B cell (primary cell): ENCODE measurements at regions of chr1 and their contacts with region 1.

Region 1: GRCh38 chr1:228212966-228213844 is 5.4 kb downstream of the OBSCN start:
- DNase-seq: peak; percentile 91
- ATAC-seq: peak; percentile 93
- H3K4me3 ChIP-seq: peak overlapping the region; percentile 19 to 73 (median 57)
- H3K4me3 Mint-ChIP-seq: peak overlapping the region; percentile 97
- H3K27ac ChIP-seq: peak overlapping the region in 1 of 2 donors; percentile 41
- H3K27ac Mint-ChIP-seq: peak overlapping the region; percentile 75
- H3K4me1 ChIP-seq: peaks cover 0 to 8% of the 10 kb centered on the region in 2 donors
- H3K4me1 Mint-ChIP-seq: peaks cover 5% of the 10 kb centered on the region
- H3K27me3 ChIP-seq: peaks cover 0 to 2% (median 0%) of the 10 kb centered on the region in 4 experiments
- H3K27me3 Mint-ChIP-seq: no peaks in the 10 kb centered on the region
- CTCF ChIP-seq: peak; percentile 34

Region 2: GRCh38 chr1:228082135-228082891 is 130.9 kb before region 1 on chr1 and contains the start of gene ARF1:
- CTCF ChIA-PET with region 1: no interaction called
- POLR2A ChIA-PET with region 1: no interaction called
- intact Hi-C with region 1: loop called (anchors 2 kb)
- DNase-seq: peak; percentile 96
- ATAC-seq: peak; percentile 92
- H3K4me3 ChIP-seq: peak within 1 kb of the TSS; percentile 78 to 97 (median 91)
- H3K4me3 Mint-ChIP-seq: peak within 1 kb of the TSS; percentile 94
- H3K27ac ChIP-seq: peak within 1 kb of the TSS; percentile 78 to 96
- H3K27ac Mint-ChIP-seq: peak within 1 kb of the TSS; percentile 93
- H3K4me1 ChIP-seq: peaks cover 44 to 50% of the 10 kb centered on the region in 2 donors
- H3K4me1 Mint-ChIP-seq: peaks cover 46% of the 10 kb centered on the region
- H3K27me3 ChIP-seq: no peaks in the 10 kb centered on the region
- H3K27me3 Mint-ChIP-seq: no peaks in the 10 kb centered on the region
- CTCF ChIP-seq: no peak
- total RNA-seq, gene ARF1: 193 and 195 TPM in 2 replicates

Region 3: DNA sequence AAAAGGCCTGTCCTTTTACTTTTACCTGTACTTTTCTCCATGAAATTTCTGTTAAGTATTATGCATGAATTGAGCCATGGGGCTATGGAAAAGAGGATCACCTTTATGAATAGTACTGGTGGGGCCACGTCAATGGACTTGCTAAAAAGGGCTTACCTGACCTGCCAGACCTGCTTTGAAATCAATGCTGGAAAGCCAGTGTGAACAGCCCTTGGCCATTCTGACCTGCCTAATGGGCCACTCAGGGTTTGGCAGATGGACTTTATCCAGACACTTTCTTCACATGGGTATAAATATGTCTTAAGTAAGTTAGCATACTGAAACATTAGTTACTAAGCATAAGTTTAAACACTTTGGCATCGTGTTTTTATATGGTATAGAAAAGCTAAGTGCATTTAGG is 81.4 kb before region 1 on chr1:
- CTCF ChIA-PET with region 1: interaction called, 4 read pairs
- POLR2A ChIA-PET with region 1: no interaction called
- intact Hi-C with region 1: loop called (anchors 1 kb)
- DNase-seq: no peak
- ATAC-seq: no peak
- H3K4me3 ChIP-seq: no peak overlapping the region
- H3K4me3 Mint-ChIP-seq: no peak overlapping the region
- H3K27ac ChIP-seq: no peak overlapping the region
- H3K27ac Mint-ChIP-seq: no peak overlapping the region
- H3K4me1 ChIP-seq: peaks cover 2 to 10% of the 10 kb centered on the region in 2 donors
- H3K4me1 Mint-ChIP-seq: peaks cover 14% of the 10 kb centered on the region
- H3K27me3 ChIP-seq: peaks cover 0 to 3% (median 1%) of the 10 kb centered on the region in 4 experiments
- H3K27me3 Mint-ChIP-seq: peaks cover 17% of the 10 kb centered on the region
- CTCF ChIP-seq: no peak

Region 4: DNA sequence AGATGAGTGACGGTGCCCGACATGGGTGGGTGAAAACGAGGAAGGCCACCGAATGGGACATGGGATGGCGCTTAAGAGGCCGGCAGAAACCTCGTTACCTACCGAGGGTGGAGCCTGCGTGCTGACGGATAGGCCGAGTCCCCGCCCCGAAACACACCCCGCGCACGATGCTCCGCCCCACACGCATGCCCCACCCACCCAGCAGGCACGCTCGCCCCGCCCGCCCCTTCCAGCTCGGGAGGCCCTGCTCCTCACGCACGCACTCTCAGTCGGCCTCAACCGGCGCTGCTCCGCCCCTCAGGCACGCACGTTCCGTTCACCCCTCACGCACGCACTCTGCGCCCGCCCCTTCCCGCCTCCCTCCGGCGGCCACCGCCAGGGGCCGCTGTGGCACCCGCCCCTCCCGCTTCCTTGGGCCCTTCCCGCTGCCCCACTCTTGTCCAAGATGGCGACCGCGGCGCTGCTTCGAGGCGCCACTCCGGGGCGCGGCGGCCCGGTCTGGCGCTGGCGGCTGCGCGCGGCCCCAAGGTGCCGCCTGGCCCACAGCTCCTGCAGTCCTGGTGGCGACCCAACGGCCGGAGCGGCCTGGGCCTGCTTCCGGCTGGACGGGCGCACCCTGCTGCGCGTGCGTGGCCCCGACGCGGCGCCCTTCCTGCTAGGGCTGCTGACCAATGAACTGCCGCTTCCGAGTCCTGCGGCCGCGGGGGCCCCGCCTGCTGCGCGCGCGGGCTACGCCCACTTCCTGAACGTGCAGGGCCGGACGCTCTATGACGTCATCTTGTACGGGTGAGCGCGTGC is 47.6 kb before region 1 on chr1 and contains the start of gene IBA57:
- CTCF ChIA-PET with region 1: interaction called, 4 read pairs
- POLR2A ChIA-PET with region 1: interaction called, 7 read pairs
- intact Hi-C with region 1: loop called (anchors 1 kb)
- DNase-seq: peak; percentile 100
- ATAC-seq: peak; percentile 84
- H3K4me3 ChIP-seq: peak within 1 kb of the TSS; percentile 64 to 88 (median 74)
- H3K4me3 Mint-ChIP-seq: peak within 1 kb of the TSS; percentile 93
- H3K27ac ChIP-seq: peak within 1 kb of the TSS; percentile 95 to 98
- H3K27ac Mint-ChIP-seq: peak within 1 kb of the TSS; percentile 99
- H3K4me1 ChIP-seq: peaks cover 14 to 26% of the 10 kb centered on the region in 2 donors
- H3K4me1 Mint-ChIP-seq: peaks cover 28% of the 10 kb centered on the region
- H3K27me3 ChIP-seq: peaks cover 0 to 5% (median 0%) of the 10 kb centered on the region in 4 experiments
- H3K27me3 Mint-ChIP-seq: no peaks in the 10 kb centered on the region
- CTCF ChIP-seq: peak; percentile 73
- total RNA-seq, gene IBA57: 12.8 and 15.3 TPM in 2 replicates

Region 5: GRCh38 chr1:228190192-228190591 is 23.0 kb before region 1 on chr1:
- CTCF ChIA-PET with region 1: no interaction called
- POLR2A ChIA-PET with region 1: no interaction called
- intact Hi-C with region 1: no loop called
- DNase-seq: no peak
- ATAC-seq: no peak
- H3K4me3 ChIP-seq: no peak overlapping the region
- H3K4me3 Mint-ChIP-seq: no peak overlapping the region
- H3K27ac ChIP-seq: no peak overlapping the region
- H3K27ac Mint-ChIP-seq: no peak overlapping the region
- H3K4me1 ChIP-seq: no peaks in the 10 kb centered on the region
- H3K4me1 Mint-ChIP-seq: no peaks in the 10 kb centered on the region
- H3K27me3 ChIP-seq: no peaks in the 10 kb centered on the region
- H3K27me3 Mint-ChIP-seq: no peaks in the 10 kb centered on the region
- CTCF ChIP-seq: no peak

Region 6: GRCh38 chr1:228275739-228276421 is 62.7 kb after region 1 on chr1:
- CTCF ChIA-PET with region 1: no interaction called
- POLR2A ChIA-PET with region 1: no interaction called
- intact Hi-C with region 1: loop called (anchors 1 kb)
- DNase-seq: peak; percentile 89
- ATAC-seq: peak; percentile 96
- H3K4me3 ChIP-seq: peak overlapping the region in 4 of 5 experiments; percentile 55 to 73 (median 67)
- H3K4me3 Mint-ChIP-seq: peak overlapping the region; percentile 82
- H3K27ac ChIP-seq: peak overlapping the region; percentile 36 to 44
- H3K27ac Mint-ChIP-seq: peak overlapping the region; percentile 53
- H3K4me1 ChIP-seq: peaks cover 5 to 19% of the 10 kb centered on the region in 2 donors
- H3K4me1 Mint-ChIP-seq: peaks cover 11% of the 10 kb centered on the region
- H3K27me3 ChIP-seq: no peaks in the 10 kb centered on the region
- H3K27me3 Mint-ChIP-seq: no peaks in the 10 kb centered on the region
- CTCF ChIP-seq: no peak

Region 7: GRCh38 chr1:228393248-228393699 is 180.1 kb after region 1 on chr1:
- CTCF ChIA-PET with region 1: no interaction called
- POLR2A ChIA-PET with region 1: no interaction called
- intact Hi-C with region 1: no loop called
- DNase-seq: no peak
- ATAC-seq: no peak
- H3K4me3 ChIP-seq: no peak overlapping the region
- H3K4me3 Mint-ChIP-seq: no peak overlapping the region
- H3K27ac ChIP-seq: no peak overlapping the region
- H3K27ac Mint-ChIP-seq: no peak overlapping the region
- H3K4me1 ChIP-seq: no peaks in the 10 kb centered on the region
- H3K4me1 Mint-ChIP-seq: no peaks in the 10 kb centered on the region
- H3K27me3 ChIP-seq: no peaks in the 10 kb centered on the region
- H3K27me3 Mint-ChIP-seq: no peaks in the 10 kb centered on the region
- CTCF ChIP-seq: no peak

Region 8: GRCh38 chr1:228515200-228515834 is 302.1 kb after region 1 on chr1:
- CTCF ChIA-PET with region 1: interaction called, 3 read pairs
- POLR2A ChIA-PET with region 1: no interaction called
- intact Hi-C with region 1: loop called (anchors 1 kb)
- DNase-seq: peak; percentile 64
- ATAC-seq: peak; percentile 28
- H3K4me3 ChIP-seq: no peak overlapping the region
- H3K4me3 Mint-ChIP-seq: no peak overlapping the region
- H3K27ac ChIP-seq: no peak overlapping the region
- H3K27ac Mint-ChIP-seq: no peak overlapping the region
- H3K4me1 ChIP-seq: no peaks in the 10 kb centered on the region
- H3K4me1 Mint-ChIP-seq: no peaks in the 10 kb centered on the region
- H3K27me3 ChIP-seq: peaks cover 0 to 17% (median 4%) of the 10 kb centered on the region in 4 experiments
- H3K27me3 Mint-ChIP-seq: peaks cover 38% of the 10 kb centered on the region
- CTCF ChIP-seq: peak; percentile 82